Activated B cell treated with CpG ODN at 0.5 μM for 24 hours (primary cell): ENCODE measurements at regions of chr3 and their contacts with region 1.

Region 1: GRCh38 chr3:11379233-11379823 is 107.1 kb downstream of the ATG7 start:
- DNase-seq: no peak
- ATAC-seq: peak; percentile 21
- H3K4me3 Mint-ChIP-seq: no peak overlapping the region
- H3K27ac Mint-ChIP-seq: no peak overlapping the region
- H3K4me1 Mint-ChIP-seq: no peaks in the 10 kb centered on the region
- H3K27me3 Mint-ChIP-seq: no peaks in the 10 kb centered on the region
- CTCF ChIP-seq: no peak

Region 2: GRCh38 chr3:11770477-11771391 is 391.4 kb after region 1 on chr3:
- CTCF ChIA-PET with region 1: no interaction called
- POLR2A ChIA-PET with region 1: no interaction called
- intact Hi-C with region 1: loop called (anchors 1 kb)
- DNase-seq: peak; percentile 20
- ATAC-seq: peak; percentile 100
- H3K4me3 Mint-ChIP-seq: peak overlapping the region; percentile 21
- H3K27ac Mint-ChIP-seq: peak overlapping the region; percentile 3
- H3K4me1 Mint-ChIP-seq: peaks cover 16% of the 10 kb centered on the region
- H3K27me3 Mint-ChIP-seq: no peaks in the 10 kb centered on the region
- CTCF ChIP-seq: no peak

Region 3: DNA sequence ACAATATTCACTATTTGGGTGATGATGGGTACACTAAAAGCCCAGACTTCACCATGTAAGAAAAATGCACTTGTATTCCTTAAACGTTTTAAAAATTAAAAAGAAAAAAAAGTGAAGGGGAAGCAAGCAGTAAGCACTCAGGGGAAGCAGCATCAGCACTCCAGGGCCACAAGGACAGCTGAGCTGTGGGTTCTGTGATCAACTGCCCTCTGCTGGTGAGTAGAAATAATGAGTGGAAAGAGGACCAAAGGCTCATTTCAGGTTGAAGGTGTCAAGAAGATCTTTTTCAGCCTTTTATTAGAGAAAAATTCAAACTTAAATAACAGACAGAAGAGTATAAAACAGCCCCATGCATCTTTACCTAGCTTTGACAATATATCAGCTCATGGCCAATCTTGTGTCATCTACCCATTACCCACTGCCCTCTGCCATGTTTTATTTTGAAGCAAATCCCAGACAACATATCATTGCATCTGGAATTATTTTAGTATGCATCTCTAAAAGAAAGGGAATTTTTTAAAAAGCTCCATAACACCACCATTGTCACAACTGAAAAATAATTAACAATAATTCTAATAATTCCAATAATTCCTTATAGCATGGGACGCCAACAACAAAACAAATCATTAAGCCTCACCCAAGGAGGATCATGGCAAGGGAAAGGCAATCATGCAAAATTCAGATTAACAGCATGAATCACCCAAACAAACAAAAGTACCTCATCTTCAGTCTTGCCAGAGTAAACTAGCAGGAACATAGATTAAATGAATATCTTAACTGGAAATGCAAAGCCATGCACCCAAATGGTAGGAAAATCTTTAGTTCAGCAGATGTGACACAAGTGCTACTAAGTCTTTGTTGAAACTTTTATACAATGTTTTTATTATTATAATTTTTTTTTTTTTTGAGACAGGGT is 424.9 kb after region 1 on chr3:
- CTCF ChIA-PET with region 1: interaction called, 27 read pairs
- POLR2A ChIA-PET with region 1: no interaction called
- intact Hi-C with region 1: loop called (anchors 1 kb)
- DNase-seq: no peak
- ATAC-seq: peak; percentile 71
- H3K4me3 Mint-ChIP-seq: no peak overlapping the region
- H3K27ac Mint-ChIP-seq: no peak overlapping the region
- H3K4me1 Mint-ChIP-seq: no peaks in the 10 kb centered on the region
- H3K27me3 Mint-ChIP-seq: no peaks in the 10 kb centered on the region
- CTCF ChIP-seq: no peak